Heart left ventricle (tissue), 16 donors: ENCODE measurements at regions of chr22 and their contacts with region 1.

Region 1: GRCh38 chr22:30876915-30877553 is 91.5 kb downstream of the MORC2 start:
- DNase-seq: peak; percentile 41 to 75 (median 44)
- ATAC-seq: peak; percentile 35 to 47 (median 39)
- H3K4me3 ChIP-seq: no peak overlapping the region
- H3K27ac ChIP-seq: peak overlapping the region in 6 of 12 donors; percentile 42 to 78 (median 64)
- H3K4me1 ChIP-seq: peaks cover 0 to 57% (median 33%) of the 10 kb centered on the region in 12 donors
- H3K27me3 ChIP-seq: no peaks in the 10 kb centered on the region
- CTCF ChIP-seq: no peak
- POLR2A ChIP-seq: no peak

Region 2: GRCh38 chr22:30742291-30743256 is 134.5 kb before region 1 on chr22:
- intact Hi-C with region 1: no loop called
- DNase-seq: no peak
- ATAC-seq: no peak
- H3K4me3 ChIP-seq: no peak overlapping the region
- H3K27ac ChIP-seq: no peak overlapping the region
- H3K4me1 ChIP-seq: peaks cover 0 to 7% (median 0%) of the 10 kb centered on the region in 12 donors
- H3K27me3 ChIP-seq: no peaks in the 10 kb centered on the region
- CTCF ChIP-seq: no peak
- POLR2A ChIP-seq: no peak

Region 3: DNA sequence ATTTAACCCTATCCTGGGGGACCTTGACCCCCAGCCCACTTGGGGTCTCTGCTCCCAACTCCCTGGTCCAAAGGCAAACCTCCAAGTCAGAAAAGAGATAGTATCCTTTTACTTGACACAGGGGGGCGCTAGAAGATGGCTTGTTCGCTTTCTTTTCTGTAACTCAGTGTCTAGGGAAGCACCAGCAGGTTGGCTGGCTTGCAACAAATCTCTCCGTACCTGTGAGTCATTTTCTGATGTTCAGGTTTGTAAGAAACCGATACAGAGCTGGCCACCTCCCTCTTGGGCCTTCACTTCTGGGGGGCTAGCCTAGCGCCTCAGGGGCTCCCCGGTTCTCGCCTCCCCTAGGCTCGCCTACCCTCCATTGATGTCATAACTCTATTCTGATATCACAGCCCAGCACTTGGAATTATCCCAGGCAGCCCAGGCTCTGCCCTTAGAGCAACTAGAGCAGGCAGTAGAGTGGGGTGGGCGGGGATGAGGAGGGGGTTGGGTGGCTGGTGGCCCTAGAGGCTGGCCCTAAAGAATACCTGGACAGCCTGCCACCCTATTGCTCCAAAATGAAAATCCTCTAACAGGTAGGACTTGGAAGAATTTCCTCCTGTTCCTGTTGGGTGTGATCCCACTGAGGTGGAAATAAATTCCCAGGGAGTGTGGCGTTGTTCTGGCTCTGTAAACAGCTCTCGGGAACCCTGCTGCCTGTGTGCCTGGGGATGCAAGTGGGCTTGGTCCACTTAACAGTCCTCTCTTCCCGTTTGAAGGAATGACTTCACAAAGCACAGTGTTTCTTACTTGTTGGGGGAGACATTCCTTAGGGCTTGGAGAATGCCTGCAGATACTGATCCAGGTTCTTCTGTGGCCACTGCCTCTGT is 113.0 kb before region 1 on chr22:
- intact Hi-C with region 1: loop called in 1 of 10 experiments (anchors 10 kb)
- DNase-seq: peak in 3 of 5 donors; percentile 38 to 48 (median 44)
- ATAC-seq: peak; percentile 56 to 84 (median 76)
- H3K4me3 ChIP-seq: no peak overlapping the region
- H3K27ac ChIP-seq: no peak overlapping the region
- H3K4me1 ChIP-seq: peaks cover 0 to 5% (median 0%) of the 10 kb centered on the region in 12 donors
- H3K27me3 ChIP-seq: no peaks in the 10 kb centered on the region
- CTCF ChIP-seq: peak; percentile 40 to 73 (median 61)
- POLR2A ChIP-seq: no peak

Region 4: GRCh38 chr22:30777587-30777986 is 99.4 kb before region 1 on chr22:
- intact Hi-C with region 1: loop called in 1 of 10 experiments (anchors 10 kb)
- DNase-seq: no peak
- ATAC-seq: no peak
- H3K4me3 ChIP-seq: no peak overlapping the region
- H3K27ac ChIP-seq: no peak overlapping the region
- H3K4me1 ChIP-seq: peaks cover 0 to 5% (median 0%) of the 10 kb centered on the region in 12 donors
- H3K27me3 ChIP-seq: no peaks in the 10 kb centered on the region
- CTCF ChIP-seq: no peak
- POLR2A ChIP-seq: no peak

Region 5: GRCh38 chr22:30802202-30803166 is 74.5 kb before region 1 on chr22:
- intact Hi-C with region 1: loop called in 1 of 10 experiments (anchors 10 kb)
- DNase-seq: peak; percentile 83 to 90 (median 89)
- ATAC-seq: peak; percentile 96 to 100 (median 100)
- H3K4me3 ChIP-seq: peak overlapping the region in 9 of 12 donors; percentile 21 to 44 (median 29)
- H3K27ac ChIP-seq: no peak overlapping the region
- H3K4me1 ChIP-seq: peaks cover 0 to 17% (median 13%) of the 10 kb centered on the region in 12 donors
- H3K27me3 ChIP-seq: peaks cover 0 to 37% (median 0%) of the 10 kb centered on the region in 9 donors
- CTCF ChIP-seq: peak in 8 of 12 donors; percentile 17 to 66 (median 46)
- POLR2A ChIP-seq: peak in 1 of 2 donors; percentile 24